Endothelial cell of umbilical vein (primary cell): ENCODE measurements at regions of chr18 and their contacts with region 1.

Region 1: DNA sequence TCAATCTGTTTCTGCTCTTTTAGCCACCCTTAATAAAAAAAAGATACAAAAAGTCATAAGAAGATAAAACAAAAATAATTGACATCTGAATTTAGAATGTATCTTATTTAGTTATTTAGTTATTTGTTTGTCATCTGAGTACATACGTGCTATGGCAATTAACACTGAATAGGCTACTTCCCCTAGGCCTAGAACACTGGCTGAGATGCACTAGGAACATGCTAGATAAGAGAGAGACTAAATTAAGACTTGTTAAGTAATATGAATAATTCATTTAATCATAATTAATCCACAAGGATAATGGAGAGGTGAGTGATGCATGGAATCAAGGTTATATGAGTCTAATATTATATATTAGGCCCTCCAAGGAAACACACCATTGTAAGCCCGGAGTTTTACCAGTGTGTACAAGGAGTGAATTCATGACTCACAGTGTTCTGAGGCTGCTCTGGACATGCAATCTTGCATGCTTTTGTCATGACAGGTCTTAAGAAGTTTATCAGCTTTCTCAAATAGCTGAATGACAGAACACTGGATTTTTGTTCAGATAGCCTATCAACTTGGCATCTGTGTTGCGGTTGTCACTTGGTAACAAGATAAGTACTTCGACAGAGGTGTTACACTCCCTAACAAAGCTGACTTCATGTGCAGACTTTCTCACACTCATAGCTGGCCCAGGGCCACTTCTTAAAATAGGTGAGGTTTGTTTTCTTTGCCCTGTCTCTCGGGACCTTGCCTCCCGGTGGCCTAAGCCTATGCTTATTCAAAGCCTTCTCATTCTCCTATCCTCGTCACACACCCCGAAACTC is 5.0 kb upstream of the SERPINB2 start:
- DNase-seq: peak; percentile 88
- H3K4me3 ChIP-seq: no peak overlapping the region
- H3K27ac ChIP-seq: peak overlapping the region; percentile 90
- H3K4me1 ChIP-seq: peaks cover 42% of the 10 kb centered on the region
- H3K27me3 ChIP-seq: no peaks in the 10 kb centered on the region
- CTCF ChIP-seq: no peak
- POLR2A ChIP-seq: no peak

Region 2: DNA sequence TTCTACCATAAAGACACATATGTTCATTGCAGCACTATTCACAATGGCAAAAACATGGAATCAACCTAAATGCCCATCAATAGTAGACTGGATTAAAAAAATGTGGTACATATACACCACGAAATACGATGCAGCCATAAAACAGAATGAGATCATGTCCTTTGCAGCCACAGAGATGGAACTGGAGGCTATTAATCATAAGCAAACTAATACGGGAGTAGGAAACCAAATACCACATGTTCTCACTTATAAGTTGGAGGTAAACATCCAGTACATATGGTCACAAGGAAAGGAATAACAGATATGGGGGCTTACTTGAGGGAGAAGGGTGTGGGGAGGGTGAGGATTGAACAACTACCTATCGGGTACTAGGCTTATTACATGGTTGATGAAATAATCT is 74.2 kb after region 1 on chr18:
- CTCF ChIA-PET with region 1: no interaction called
- POLR2A ChIA-PET with region 1: no interaction called
- dilution Hi-C with region 1: no loop called
- intact Hi-C with region 1: no loop called
- DNase-seq: no peak
- H3K4me3 ChIP-seq: no peak overlapping the region
- H3K27ac ChIP-seq: no peak overlapping the region
- H3K4me1 ChIP-seq: no peaks in the 10 kb centered on the region
- H3K27me3 ChIP-seq: peaks cover 17 to 51% of the 10 kb centered on the region in 2 experiments
- CTCF ChIP-seq: no peak
- POLR2A ChIP-seq: no peak

Region 3: DNA sequence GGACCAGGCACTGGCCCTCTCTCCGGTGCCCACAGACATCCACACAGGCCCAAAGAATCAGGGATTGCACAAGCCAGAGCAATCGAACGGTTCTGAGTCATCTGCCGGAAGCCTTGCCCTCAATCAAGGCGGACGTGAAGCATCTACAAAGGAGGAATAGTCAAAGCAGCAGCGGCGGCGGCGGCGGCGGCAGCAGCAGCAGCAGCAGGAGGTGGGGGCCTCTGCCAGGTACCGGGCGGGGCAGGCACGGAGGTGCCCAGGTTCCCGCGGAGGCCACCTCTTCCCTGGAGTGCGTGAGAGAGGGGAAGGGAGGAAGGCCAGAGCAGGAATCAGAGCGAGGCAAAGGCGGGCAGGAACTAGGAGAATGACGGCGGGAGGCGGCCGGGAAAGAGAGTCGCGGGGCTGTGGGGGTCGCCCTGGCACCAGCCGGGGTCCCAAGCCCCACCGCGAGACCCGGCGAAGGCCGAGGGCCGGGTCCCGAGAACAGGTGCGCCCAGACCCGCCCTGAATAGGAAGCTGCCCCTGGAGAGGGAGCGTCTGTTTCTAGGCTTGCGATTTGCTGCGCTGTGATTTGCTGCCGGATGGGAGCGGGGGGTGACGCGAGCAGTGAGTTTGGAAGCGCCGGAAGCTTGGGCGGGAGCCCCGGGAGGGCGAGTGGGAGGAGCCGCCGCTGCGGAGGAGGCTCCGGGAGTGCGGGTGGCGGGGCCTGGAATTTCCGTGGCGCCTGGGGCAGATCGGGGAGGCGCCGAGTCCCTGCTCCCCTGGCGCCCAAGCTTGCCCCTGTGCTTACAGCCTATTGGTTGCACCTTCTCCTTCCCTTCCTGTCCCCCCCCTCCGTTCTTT is 87.6 kb after region 1 on chr18 and contains the start of gene SERPINB8:
- CTCF ChIA-PET with region 1: no interaction called
- POLR2A ChIA-PET with region 1: no interaction called
- dilution Hi-C with region 1: no loop called
- intact Hi-C with region 1: loop called (anchors 1 kb)
- DNase-seq: peak; percentile 86
- H3K4me3 ChIP-seq: peak within 1 kb of the TSS; percentile 60 to 94 (median 63)
- H3K27ac ChIP-seq: peak within 1 kb of the TSS; percentile 99
- H3K4me1 ChIP-seq: peaks cover 14% of the 10 kb centered on the region
- H3K27me3 ChIP-seq: no peaks in the 10 kb centered on the region
- CTCF ChIP-seq: no peak
- POLR2A ChIP-seq: peak; percentile 82
- total RNA-seq, gene SERPINB8: 24.1 and 25.7 TPM in 2 replicates